ENCODE measurements at regions of chr14 and their contacts with region 1.

Region 1: GRCh38 chr14:75088574-75089373 is 19.3 kb downstream of the ZC2HC1C start:
- DNase-seq: no peak
- ATAC-seq: peak; percentile 68

Region 2: GRCh38 chr14:74913986-74914573 is 174.7 kb before region 1 on chr14:
- intact Hi-C with region 1: loop called (anchors 2 kb)
- DNase-seq: no peak
- ATAC-seq: peak; percentile 54

Region 3: DNA sequence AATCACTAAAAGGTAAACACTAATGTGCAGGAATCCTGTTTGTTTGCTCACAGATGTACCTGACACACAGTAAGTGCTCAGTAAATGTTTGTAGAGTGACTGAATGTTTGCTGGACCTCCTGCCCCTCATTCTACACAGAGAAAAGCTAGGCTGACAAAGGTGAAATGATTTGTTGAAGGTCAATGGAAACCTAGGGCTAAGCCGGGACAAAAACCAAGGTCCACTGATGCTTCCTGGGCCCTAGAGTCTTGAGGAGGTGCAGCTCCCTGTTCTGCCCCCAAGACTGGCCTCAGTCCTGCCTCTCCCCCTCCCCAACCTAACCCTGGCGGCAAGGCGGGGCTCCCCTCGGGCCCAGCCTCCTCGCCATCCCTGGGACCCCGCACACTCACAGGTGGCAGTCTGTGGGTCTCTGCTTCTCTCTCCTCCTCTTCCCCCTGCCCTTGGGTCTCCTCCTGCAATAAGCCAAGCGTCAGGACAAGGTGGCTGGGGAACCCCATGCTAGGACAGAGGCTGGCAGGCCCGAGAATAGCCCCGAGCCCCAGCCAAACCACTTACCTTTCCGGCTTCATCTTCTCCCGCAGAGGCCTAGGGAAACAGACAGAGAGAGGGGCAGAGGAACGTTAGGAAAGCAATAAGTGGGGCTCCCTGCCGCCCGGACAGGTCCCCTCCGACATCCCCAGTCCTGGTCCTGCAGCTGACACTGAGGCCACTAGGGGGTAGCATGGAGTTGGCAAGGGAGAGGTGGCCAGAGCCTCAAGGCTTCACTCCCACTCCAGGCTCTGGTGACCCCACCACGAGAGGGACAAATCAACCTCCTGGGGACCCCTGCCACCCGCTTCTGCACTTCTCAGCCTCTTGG is 142.7 kb before region 1 on chr14:
- intact Hi-C with region 1: loop called (anchors 10 kb)
- DNase-seq: peak; percentile 89
- ATAC-seq: peak; percentile 83

Measured in Right ventricle myocardium inferior (tissue), 1 donor.